ENCODE measurements at regions of chr5 and their contacts with region 1.

Region 1: DNA sequence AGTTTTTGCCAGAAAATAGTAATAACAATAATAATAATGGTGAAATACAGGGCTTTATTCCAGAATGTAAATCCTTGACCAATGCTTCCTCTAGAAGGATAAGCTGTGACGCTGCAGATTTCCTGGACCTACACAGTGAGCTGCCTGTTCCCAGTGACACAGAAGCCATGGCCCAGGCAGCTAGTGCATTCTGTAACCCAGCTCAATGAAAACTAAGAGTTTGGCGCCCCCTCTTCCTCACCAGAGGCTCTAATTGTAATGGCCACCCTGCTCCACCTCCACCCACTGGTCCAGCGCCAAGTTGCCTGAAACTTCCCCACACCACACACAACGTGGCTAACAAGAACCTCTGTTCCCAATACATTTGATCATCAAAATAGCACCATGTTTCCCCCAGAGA is 248.1 kb downstream of the CETN3 start:
- DNase-seq: peak; percentile 76
- H3K4me3 ChIP-seq: no peak overlapping the region
- H3K27ac ChIP-seq: no peak overlapping the region
- H3K4me1 ChIP-seq: no peaks in the 10 kb centered on the region
- H3K27me3 ChIP-seq: no peaks in the 10 kb centered on the region
- CTCF ChIP-seq: peak; percentile 40 to 58
- POLR2A ChIP-seq: no peak

Region 2: DNA sequence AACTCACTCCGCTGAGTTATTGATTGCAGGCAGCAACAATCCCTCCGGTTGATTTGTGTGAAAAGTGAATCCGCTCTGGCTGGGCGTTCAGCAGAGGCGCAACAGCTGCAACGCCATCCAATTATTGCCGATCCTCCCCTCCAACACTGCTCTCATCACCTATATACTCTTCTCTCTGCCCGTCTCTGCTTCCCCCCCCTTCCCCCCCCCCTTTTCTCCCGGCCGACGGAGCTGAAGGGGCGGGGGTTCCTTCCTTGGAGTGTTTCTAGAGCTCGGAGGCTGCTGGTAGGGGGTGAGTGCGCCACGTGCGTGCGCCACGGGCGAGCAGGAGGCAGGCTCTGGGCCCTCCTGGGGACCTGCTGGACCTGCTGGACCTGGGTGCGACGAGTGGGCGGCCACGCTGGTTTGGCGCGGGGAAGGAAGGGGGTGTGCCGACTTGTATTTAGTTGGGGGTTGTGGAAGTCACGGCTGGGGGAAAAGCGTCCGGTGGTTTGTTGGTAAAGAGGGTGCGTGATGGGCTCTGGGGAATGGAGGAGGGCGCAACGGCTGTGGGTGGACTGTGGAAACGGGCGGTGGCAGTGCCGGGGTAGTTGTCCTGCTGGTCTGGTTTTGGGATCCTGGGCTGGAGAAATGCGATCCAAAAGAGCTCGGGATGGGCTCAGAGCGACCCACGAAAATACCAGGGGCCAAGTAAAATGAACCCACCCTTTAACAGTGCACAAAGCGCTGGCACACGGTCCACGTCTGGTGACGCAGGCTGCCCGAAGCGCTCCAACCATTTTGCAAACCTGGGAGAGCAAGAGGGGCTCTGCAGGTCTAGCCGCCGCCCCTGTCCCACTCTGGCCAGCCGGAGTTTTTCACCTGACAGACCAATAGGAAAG is 1272.0 kb before region 1 on chr5:
- CTCF ChIA-PET with region 1: interaction called, 11 read pairs
- POLR2A ChIA-PET with region 1: no interaction called
- dilution Hi-C with region 1: no loop called
- intact Hi-C with region 1: loop called (anchors 1 kb)
- DNase-seq: peak; percentile 66
- H3K4me3 ChIP-seq: peak overlapping the region; percentile 47 to 64 (median 52)
- H3K27ac ChIP-seq: peak overlapping the region; percentile 33
- H3K4me1 ChIP-seq: peaks cover 13% of the 10 kb centered on the region
- H3K27me3 ChIP-seq: no peaks in the 10 kb centered on the region
- CTCF ChIP-seq: no peak
- POLR2A ChIP-seq: no peak

Region 3: DNA sequence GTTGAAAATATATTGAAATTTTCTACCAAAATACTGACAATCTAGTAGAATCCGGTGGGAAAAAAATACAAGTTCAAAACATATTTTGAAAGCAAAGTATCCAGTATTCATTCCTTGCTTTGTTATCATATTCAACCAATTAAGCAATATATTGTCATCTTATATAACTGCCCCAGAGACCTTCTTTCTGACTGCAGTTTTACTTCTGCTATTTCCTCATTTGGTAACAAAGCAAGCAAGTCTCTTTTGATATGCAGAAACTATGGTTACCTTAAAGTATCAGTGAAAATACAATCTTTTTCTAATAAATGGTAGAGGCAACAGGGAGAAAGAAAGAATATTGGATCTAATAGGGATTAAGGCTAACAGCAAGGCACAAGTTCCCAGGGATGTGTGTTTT is 614.8 kb before region 1 on chr5:
- CTCF ChIA-PET with region 1: no interaction called
- POLR2A ChIA-PET with region 1: no interaction called
- dilution Hi-C with region 1: no loop called
- intact Hi-C with region 1: no loop called
- DNase-seq: no peak
- H3K4me3 ChIP-seq: no peak overlapping the region
- H3K27ac ChIP-seq: no peak overlapping the region
- H3K4me1 ChIP-seq: no peaks in the 10 kb centered on the region
- H3K27me3 ChIP-seq: no peaks in the 10 kb centered on the region
- CTCF ChIP-seq: no peak
- POLR2A ChIP-seq: no peak